Endothelial cell of umbilical vein (primary cell): ENCODE measurements at regions of chr4 and their contacts with region 1.

Region 1: GRCh38 chr4:157992038-157992705 is 180.7 kb downstream of the GASK1B start:
- DNase-seq: peak; percentile 92
- H3K4me3 ChIP-seq: peak overlapping the region; percentile 12 to 61 (median 21)
- H3K27ac ChIP-seq: peak overlapping the region; percentile 32
- H3K4me1 ChIP-seq: peaks cover 37% of the 10 kb centered on the region
- H3K27me3 ChIP-seq: no peaks in the 10 kb centered on the region
- CTCF ChIP-seq: peak; percentile 36 to 41
- POLR2A ChIP-seq: no peak

Region 2: DNA sequence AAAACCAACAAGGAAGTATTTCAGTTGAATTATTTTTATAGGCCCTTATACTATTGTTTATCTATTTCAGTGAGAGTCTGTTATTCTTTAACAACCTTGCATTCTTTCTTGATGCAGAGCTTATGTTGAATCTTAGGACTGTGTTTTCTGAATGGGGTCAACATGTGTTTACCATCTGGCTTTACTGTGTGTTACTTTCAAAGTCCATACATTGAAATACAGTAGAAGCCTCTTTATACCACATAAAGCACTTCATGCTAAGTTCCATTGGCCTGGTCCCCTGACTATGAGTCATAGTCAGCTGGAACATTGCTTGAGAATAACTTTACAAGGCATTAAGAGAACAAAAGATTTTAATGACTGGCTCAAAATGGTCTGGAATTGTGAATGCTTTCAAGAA is 28.0 kb after region 1 on chr4:
- CTCF ChIA-PET with region 1: interaction called, 5 read pairs
- POLR2A ChIA-PET with region 1: no interaction called
- dilution Hi-C with region 1: no loop called
- intact Hi-C with region 1: loop called (anchors 1 kb)
- DNase-seq: peak; percentile 96
- H3K4me3 ChIP-seq: peak overlapping the region in 1 of 3 experiments; percentile 30
- H3K27ac ChIP-seq: peak overlapping the region; percentile 95
- H3K4me1 ChIP-seq: peaks cover 59% of the 10 kb centered on the region
- H3K27me3 ChIP-seq: no peaks in the 10 kb centered on the region
- CTCF ChIP-seq: no peak
- POLR2A ChIP-seq: no peak

Region 3: DNA sequence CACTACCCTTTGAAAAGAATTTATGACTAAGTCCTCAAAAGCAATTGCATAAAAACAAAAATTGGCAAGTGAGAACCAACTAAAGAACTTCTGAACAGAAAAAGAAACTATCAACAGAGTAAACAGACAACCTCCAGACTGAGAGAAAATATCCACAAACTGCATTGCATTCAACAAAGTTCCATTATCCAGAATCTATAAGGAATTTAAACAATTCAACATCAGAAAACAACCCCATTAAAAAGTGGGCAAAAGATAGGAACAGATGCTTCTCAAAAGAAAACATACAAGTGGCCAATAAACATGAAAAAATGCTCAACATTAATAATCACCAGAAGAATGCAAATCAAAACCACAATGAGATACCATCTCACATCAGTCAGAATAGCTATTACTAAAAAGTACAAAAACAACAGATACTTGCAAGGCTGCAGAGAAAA is 50.4 kb after region 1 on chr4:
- CTCF ChIA-PET with region 1: no interaction called
- POLR2A ChIA-PET with region 1: no interaction called
- dilution Hi-C with region 1: no loop called
- intact Hi-C with region 1: loop called (anchors 2 kb)
- DNase-seq: peak; percentile 60
- H3K4me3 ChIP-seq: no peak overlapping the region
- H3K27ac ChIP-seq: no peak overlapping the region
- H3K4me1 ChIP-seq: peaks cover 13% of the 10 kb centered on the region
- H3K27me3 ChIP-seq: no peaks in the 10 kb centered on the region
- CTCF ChIP-seq: no peak
- POLR2A ChIP-seq: no peak

Region 4: GRCh38 chr4:158121187-158121586 is 129.0 kb after region 1 on chr4:
- CTCF ChIA-PET with region 1: interaction called, 3 read pairs
- POLR2A ChIA-PET with region 1: no interaction called
- dilution Hi-C with region 1: no loop called
- intact Hi-C with region 1: loop called (anchors 1 kb)
- DNase-seq: no peak
- H3K4me3 ChIP-seq: no peak overlapping the region
- H3K27ac ChIP-seq: no peak overlapping the region
- H3K4me1 ChIP-seq: no peaks in the 10 kb centered on the region
- H3K27me3 ChIP-seq: no peaks in the 10 kb centered on the region
- CTCF ChIP-seq: no peak
- POLR2A ChIP-seq: no peak

Region 5: GRCh38 chr4:158253350-158253980 is 261.3 kb after region 1 on chr4:
- CTCF ChIA-PET with region 1: interaction called, 6 read pairs
- POLR2A ChIA-PET with region 1: no interaction called
- dilution Hi-C with region 1: no loop called
- intact Hi-C with region 1: loop called (anchors 1 kb)
- DNase-seq: peak; percentile 71
- H3K4me3 ChIP-seq: no peak overlapping the region
- H3K27ac ChIP-seq: no peak overlapping the region
- H3K4me1 ChIP-seq: no peaks in the 10 kb centered on the region
- H3K27me3 ChIP-seq: no peaks in the 10 kb centered on the region
- CTCF ChIP-seq: peak; percentile 60
- POLR2A ChIP-seq: no peak

Region 6: GRCh38 chr4:158624889-158625478 is 632.8 kb after region 1 on chr4:
- CTCF ChIA-PET with region 1: no interaction called
- POLR2A ChIA-PET with region 1: no interaction called
- dilution Hi-C with region 1: no loop called
- intact Hi-C with region 1: loop called (anchors 10 kb)
- DNase-seq: peak; percentile 63
- H3K4me3 ChIP-seq: no peak overlapping the region
- H3K27ac ChIP-seq: no peak overlapping the region
- H3K4me1 ChIP-seq: no peaks in the 10 kb centered on the region
- H3K27me3 ChIP-seq: no peaks in the 10 kb centered on the region
- CTCF ChIP-seq: peak; percentile 42 to 50
- POLR2A ChIP-seq: no peak